ENCODE measurements at regions of chr1 and their contacts with region 1.

Region 1: GRCh38 chr1:904310-904950 is 19.3 kb upstream of the SAMD11 start:
- DNase-seq: peak; percentile 95
- H3K4me3 ChIP-seq: peak overlapping the region; percentile 44 to 60 (median 54)
- H3K27ac ChIP-seq: peak overlapping the region in 3 of 4 donors; percentile 20 to 55 (median 43)
- H3K4me1 ChIP-seq: peaks cover 15 to 38% (median 34%) of the 10 kb centered on the region in 4 donors
- H3K27me3 ChIP-seq: peaks cover 0 to 62% (median 0%) of the 10 kb centered on the region in 4 donors
- CTCF ChIP-seq: peak; percentile 90 to 99 (median 95)
- EP300 ChIP-seq: no peak
- POLR2A ChIP-seq: no peak

Region 2: GRCh38 chr1:938088-938683 is 33.8 kb after region 1 on chr1:
- intact Hi-C with region 1: loop called (anchors 5 kb)
- DNase-seq: no peak
- H3K4me3 ChIP-seq: no peak overlapping the region
- H3K27ac ChIP-seq: no peak overlapping the region
- H3K4me1 ChIP-seq: peaks cover 40 to 59% (median 54%) of the 10 kb centered on the region in 4 donors
- H3K27me3 ChIP-seq: peaks cover 10 to 92% (median 46%) of the 10 kb centered on the region in 4 donors
- CTCF ChIP-seq: peak; percentile 18 to 45 (median 25)
- EP300 ChIP-seq: no peak
- POLR2A ChIP-seq: no peak

Region 3: GRCh38 chr1:966611-967300 is 62.3 kb after region 1 on chr1:
- intact Hi-C with region 1: no loop called
- DNase-seq: no peak
- H3K4me3 ChIP-seq: peak overlapping the region; percentile 56 to 67 (median 64)
- H3K27ac ChIP-seq: peak overlapping the region; percentile 39 to 66 (median 60)
- H3K4me1 ChIP-seq: peaks cover 14 to 26% (median 20%) of the 10 kb centered on the region in 4 donors
- H3K27me3 ChIP-seq: peaks cover 0 to 48% (median 17%) of the 10 kb centered on the region in 4 donors
- CTCF ChIP-seq: no peak
- EP300 ChIP-seq: no peak
- POLR2A ChIP-seq: no peak

Measured in esophagus muscularis mucosa (tissue), 4 donors.